ENCODE measurements at regions of chr14 and their contacts with region 1.

Region 1: GRCh38 chr14:69818757-69819191 is 21.7 kb upstream of the SLC10A1 start:
- DNase-seq: peak; percentile 52
- H3K4me3 ChIP-seq: no peak overlapping the region
- H3K27ac ChIP-seq: no peak overlapping the region
- H3K4me1 ChIP-seq: no peaks in the 10 kb centered on the region
- H3K27me3 ChIP-seq: no peaks in the 10 kb centered on the region
- CTCF ChIP-seq: peak; percentile 90

Region 2: GRCh38 chr14:69708586-69709174 is 110.1 kb before region 1 on chr14:
- intact Hi-C with region 1: no loop called
- DNase-seq: no peak
- H3K4me3 ChIP-seq: no peak overlapping the region
- H3K27ac ChIP-seq: no peak overlapping the region
- H3K4me1 ChIP-seq: peaks cover 22% of the 10 kb centered on the region
- H3K27me3 ChIP-seq: no peaks in the 10 kb centered on the region
- CTCF ChIP-seq: no peak

Region 3: GRCh38 chr14:69726761-69727511 is 91.8 kb before region 1 on chr14:
- intact Hi-C with region 1: loop called (anchors 5 kb)
- DNase-seq: peak; percentile 86
- H3K4me3 ChIP-seq: peak overlapping the region; percentile 37
- H3K27ac ChIP-seq: no peak overlapping the region
- H3K4me1 ChIP-seq: peaks cover 3% of the 10 kb centered on the region
- H3K27me3 ChIP-seq: no peaks in the 10 kb centered on the region
- CTCF ChIP-seq: peak; percentile 96

Region 4: DNA sequence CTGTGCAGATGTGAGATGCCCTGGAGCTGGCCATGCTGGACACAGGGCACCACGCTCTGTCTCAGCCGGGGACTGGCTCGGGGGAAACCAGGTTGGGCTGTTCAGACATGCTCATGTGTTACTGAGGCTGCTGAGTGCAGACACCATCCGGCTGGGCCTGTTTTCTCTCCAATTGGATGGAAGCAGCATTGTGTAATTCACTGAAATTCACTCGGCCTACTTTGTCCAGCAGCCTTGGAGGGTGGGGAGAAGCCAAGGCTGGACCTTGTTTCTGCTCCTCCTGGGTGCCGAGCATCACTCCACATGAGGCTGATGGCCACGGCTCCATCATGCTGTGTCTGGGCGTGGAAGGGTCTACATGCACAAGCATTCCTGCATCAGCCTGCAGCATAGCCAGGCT is 191.2 kb after region 1 on chr14:
- intact Hi-C with region 1: no loop called
- DNase-seq: no peak
- H3K4me3 ChIP-seq: no peak overlapping the region
- H3K27ac ChIP-seq: no peak overlapping the region
- H3K4me1 ChIP-seq: no peaks in the 10 kb centered on the region
- H3K27me3 ChIP-seq: no peaks in the 10 kb centered on the region
- CTCF ChIP-seq: no peak

Region 5: DNA sequence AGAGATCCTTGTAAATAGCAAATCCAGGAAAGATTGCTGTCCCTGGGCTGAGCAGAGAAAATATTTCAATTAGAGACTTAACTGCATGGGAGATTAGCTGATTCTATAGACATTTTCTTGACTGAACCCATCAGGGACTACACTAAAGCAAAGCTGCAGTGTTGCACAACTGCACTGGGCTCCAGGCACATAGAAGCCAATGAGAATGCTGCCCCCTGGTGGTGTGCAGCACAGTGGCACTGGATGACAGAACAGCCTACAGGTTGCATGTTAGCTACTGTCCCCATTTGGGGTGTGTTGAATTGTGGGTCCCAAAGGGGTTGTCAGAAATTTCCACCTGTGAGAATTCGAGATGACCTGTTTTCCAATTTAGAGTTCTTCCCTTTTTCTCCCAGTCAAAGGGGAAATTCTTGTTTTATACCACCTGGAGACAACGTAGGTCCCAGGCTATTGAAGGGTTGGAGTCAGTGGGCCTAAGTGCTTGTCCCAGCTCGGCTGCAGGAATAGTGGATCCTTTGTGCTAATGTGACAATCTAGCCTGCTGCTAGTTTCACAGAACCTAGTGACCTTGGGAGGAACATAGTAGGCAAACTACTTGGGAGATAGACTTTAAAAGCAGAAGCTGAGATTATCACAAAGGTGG is 255.3 kb after region 1 on chr14:
- intact Hi-C with region 1: loop called (anchors 5 kb)
- DNase-seq: peak; percentile 75
- H3K4me3 ChIP-seq: no peak overlapping the region
- H3K27ac ChIP-seq: no peak overlapping the region
- H3K4me1 ChIP-seq: no peaks in the 10 kb centered on the region
- H3K27me3 ChIP-seq: no peaks in the 10 kb centered on the region
- CTCF ChIP-seq: peak; percentile 78

Region 6: DNA sequence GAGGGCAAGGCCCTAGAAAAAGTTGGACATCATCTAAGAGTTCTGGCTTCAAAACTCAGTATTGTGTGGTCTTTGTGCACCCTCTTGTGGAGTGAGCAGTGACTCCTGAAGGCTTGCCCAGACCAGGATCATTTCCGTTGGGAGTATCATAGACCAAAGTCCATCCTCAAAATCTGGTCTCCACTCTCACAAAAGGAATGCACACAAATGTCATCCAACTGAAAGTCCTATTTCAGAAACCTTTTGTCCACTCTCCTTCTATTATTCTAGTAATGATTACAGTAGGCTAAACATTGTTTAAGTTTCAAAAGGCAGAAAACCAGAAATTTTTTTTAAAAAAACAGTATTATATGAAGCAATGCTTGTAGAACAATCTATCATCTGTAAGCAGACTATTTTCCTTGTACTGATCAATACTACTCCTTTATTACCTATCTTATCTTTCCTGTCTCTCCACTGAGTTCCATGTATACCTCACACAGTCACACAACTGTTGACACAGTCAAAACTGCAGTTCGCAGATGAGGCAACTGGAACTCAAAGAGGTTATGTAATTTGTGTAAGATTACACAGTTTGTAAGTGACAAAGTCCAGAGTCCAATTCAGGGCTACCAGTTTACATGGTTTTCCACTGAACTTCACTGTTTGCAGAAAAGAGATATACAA is 499.3 kb after region 1 on chr14:
- intact Hi-C with region 1: loop called (anchors 5 kb)
- DNase-seq: peak; percentile 44
- H3K4me3 ChIP-seq: no peak overlapping the region
- H3K27ac ChIP-seq: no peak overlapping the region
- H3K4me1 ChIP-seq: no peaks in the 10 kb centered on the region
- H3K27me3 ChIP-seq: no peaks in the 10 kb centered on the region
- CTCF ChIP-seq: peak; percentile 37